Natural killer cell (primary cell): ENCODE measurements at regions of chr11 and their contacts with region 1.

Region 1: GRCh38 chr11:12235947-12236743 is 125.8 kb downstream of the MICAL2 start:
- DNase-seq: peak; percentile 57 to 78
- ATAC-seq: peak; percentile 76 to 85 (median 80)
- H3K4me3 ChIP-seq: no peak overlapping the region
- H3K4me3 Mint-ChIP-seq: peak overlapping the region; percentile 81
- H3K27ac ChIP-seq: peak overlapping the region; percentile 77
- H3K27ac Mint-ChIP-seq: peak overlapping the region; percentile 93 to 94
- H3K4me1 ChIP-seq: peaks cover 24% of the 10 kb centered on the region
- H3K4me1 Mint-ChIP-seq: peaks cover 27 to 28% of the 10 kb centered on the region in 2 donors
- H3K27me3 ChIP-seq: no peaks in the 10 kb centered on the region
- H3K27me3 Mint-ChIP-seq: no peaks in the 10 kb centered on the region
- CTCF ChIP-seq: peak; percentile 86

Region 2: GRCh38 chr11:12043959-12044819 is 192.0 kb before region 1 on chr11:
- intact Hi-C with region 1: loop called (anchors 1 kb)
- DNase-seq: peak; percentile 41 to 85
- ATAC-seq: peak; percentile 66 to 80 (median 70)
- H3K4me3 ChIP-seq: no peak overlapping the region
- H3K4me3 Mint-ChIP-seq: no peak overlapping the region
- H3K27ac ChIP-seq: no peak overlapping the region
- H3K27ac Mint-ChIP-seq: no peak overlapping the region
- H3K4me1 ChIP-seq: peaks cover 9% of the 10 kb centered on the region
- H3K4me1 Mint-ChIP-seq: peaks cover 4 to 7% of the 10 kb centered on the region in 2 donors
- H3K27me3 ChIP-seq: no peaks in the 10 kb centered on the region
- H3K27me3 Mint-ChIP-seq: peaks cover 8 to 17% of the 10 kb centered on the region in 2 donors
- CTCF ChIP-seq: peak; percentile 84

Region 3: DNA sequence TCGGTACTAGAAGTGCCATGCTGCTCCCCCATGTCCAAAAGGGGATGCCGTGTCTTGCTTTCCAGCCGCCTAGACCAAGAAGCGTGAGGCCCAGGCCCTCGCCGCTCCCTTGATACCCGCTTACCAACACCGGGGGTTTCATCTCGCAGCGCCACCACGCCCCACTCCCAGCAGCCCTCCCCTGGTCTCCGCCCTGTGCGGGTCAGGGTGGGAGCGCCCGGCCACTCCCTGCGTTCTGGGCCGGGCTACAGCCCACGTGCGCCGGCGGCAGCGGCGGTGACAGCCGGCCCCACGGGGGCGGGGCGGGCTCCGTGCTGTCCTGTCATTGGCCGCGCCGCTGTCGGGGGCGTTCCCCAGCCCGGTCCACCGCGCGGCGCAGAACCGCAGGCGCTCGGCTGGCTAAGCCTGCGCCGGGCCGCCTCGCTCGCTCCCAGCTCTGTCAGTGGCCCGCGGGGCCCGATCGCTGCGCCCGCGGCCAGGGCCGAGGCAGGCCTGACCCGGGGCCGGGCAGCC is 125.9 kb before region 1 on chr11 and contains the start of gene MICAL2:
- intact Hi-C with region 1: loop called (anchors 1 kb)
- DNase-seq: peak; percentile 86 to 92
- ATAC-seq: peak; percentile 95 to 99 (median 97)
- H3K4me3 ChIP-seq: peak within 1 kb of the TSS; percentile 46
- H3K4me3 Mint-ChIP-seq: peak within 1 kb of the TSS; percentile 83
- H3K27ac ChIP-seq: peak within 1 kb of the TSS; percentile 9
- H3K27ac Mint-ChIP-seq: peak within 1 kb of the TSS in 1 of 2 donors; percentile 80
- H3K4me1 ChIP-seq: peaks cover 44% of the 10 kb centered on the region
- H3K4me1 Mint-ChIP-seq: peaks cover 26 to 32% of the 10 kb centered on the region in 2 donors
- H3K27me3 ChIP-seq: no peaks in the 10 kb centered on the region
- H3K27me3 Mint-ChIP-seq: peaks cover under 1 to 5% of the 10 kb centered on the region in 2 donors
- CTCF ChIP-seq: no peak
- total RNA-seq, gene MICAL2: 54.6 to 68.6 (median 57.4) TPM

Region 4: DNA sequence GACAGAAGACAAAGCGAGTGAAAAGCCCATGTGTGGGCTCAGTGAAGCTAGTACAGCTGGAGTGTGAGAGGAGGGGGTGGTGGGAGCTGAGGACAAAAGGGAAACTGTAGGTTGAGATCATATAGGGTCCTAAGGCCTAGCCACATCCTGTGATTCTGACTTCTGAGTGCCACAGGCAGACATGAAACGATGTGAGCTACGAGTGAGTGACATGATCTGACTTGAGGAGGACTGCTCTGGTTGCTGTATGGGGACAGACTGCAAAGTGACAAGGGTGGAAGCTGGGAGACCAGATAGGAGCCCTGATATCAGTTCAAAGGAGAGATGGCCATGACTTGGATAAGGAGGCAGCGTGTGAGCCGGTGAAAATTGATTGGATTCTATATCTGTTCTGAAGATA is 40.4 kb before region 1 on chr11:
- intact Hi-C with region 1: loop called (anchors 2 kb)
- DNase-seq: peak; percentile 24 to 82
- ATAC-seq: peak; percentile 83 to 92 (median 85)
- H3K4me3 ChIP-seq: peak overlapping the region; percentile 26
- H3K4me3 Mint-ChIP-seq: peak overlapping the region; percentile 89
- H3K27ac ChIP-seq: peak overlapping the region; percentile 81
- H3K27ac Mint-ChIP-seq: peak overlapping the region; percentile 86 to 90
- H3K4me1 ChIP-seq: peaks cover 48% of the 10 kb centered on the region
- H3K4me1 Mint-ChIP-seq: peaks cover 48 to 56% of the 10 kb centered on the region in 2 donors
- H3K27me3 ChIP-seq: no peaks in the 10 kb centered on the region
- H3K27me3 Mint-ChIP-seq: no peaks in the 10 kb centered on the region
- CTCF ChIP-seq: no peak

Region 5: GRCh38 chr11:12224537-12224893 is 11.6 kb before region 1 on chr11:
- intact Hi-C with region 1: loop called (anchors 1 kb)
- DNase-seq: peak; percentile 89 to 95
- ATAC-seq: peak; percentile 89 to 96 (median 94)
- H3K4me3 ChIP-seq: peak overlapping the region; percentile 31
- H3K4me3 Mint-ChIP-seq: peak overlapping the region; percentile 87
- H3K27ac ChIP-seq: peak overlapping the region; percentile 86
- H3K27ac Mint-ChIP-seq: peak overlapping the region; percentile 95
- H3K4me1 ChIP-seq: peaks cover 62% of the 10 kb centered on the region
- H3K4me1 Mint-ChIP-seq: peaks cover 49 to 64% of the 10 kb centered on the region in 2 donors
- H3K27me3 ChIP-seq: no peaks in the 10 kb centered on the region
- H3K27me3 Mint-ChIP-seq: peaks cover 4 to 7% of the 10 kb centered on the region in 2 donors
- CTCF ChIP-seq: no peak

Region 6: DNA sequence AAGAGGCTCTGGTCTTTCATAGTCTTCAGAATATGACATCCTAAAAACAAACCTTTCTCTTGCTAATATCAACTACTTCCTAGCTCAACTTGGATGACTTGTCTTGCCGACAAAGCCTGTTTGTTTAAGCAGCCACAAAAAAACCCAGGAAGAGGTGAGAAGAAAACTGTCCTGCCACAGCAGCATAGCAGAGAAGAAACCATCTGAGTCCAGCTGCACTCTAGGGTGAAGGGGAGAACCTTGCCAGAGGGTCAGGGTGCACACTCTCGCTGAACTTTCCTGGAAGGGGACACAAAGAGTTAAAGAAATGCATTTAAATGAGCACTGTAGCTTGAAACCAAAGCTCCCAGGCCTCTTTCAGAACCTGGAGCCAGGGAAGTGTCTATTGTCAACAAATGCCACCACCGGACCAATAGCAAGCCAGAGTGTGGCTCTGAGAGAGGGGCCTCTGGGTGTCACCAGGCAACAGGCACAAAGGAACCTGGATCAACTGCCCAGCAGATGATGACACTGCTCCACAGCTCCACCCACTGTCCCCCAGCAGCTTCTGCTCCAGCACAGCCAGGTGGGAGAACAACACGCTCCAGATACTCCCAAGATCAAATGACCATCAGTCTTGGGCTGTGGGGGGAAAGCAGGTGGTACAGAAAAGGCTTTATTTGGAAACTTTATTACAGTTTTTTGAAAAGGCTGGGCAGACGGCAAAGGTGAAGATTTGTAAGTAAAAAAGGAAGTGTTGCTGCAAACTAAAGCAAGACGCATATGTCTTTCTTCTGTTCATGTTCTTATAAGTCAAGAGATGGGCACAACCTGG is 878.6 kb after region 1 on chr11:
- intact Hi-C with region 1: no loop called
- DNase-seq: no peak
- ATAC-seq: no peak
- H3K4me3 ChIP-seq: no peak overlapping the region
- H3K4me3 Mint-ChIP-seq: no peak overlapping the region
- H3K27ac ChIP-seq: no peak overlapping the region
- H3K27ac Mint-ChIP-seq: no peak overlapping the region
- H3K4me1 ChIP-seq: no peaks in the 10 kb centered on the region
- H3K4me1 Mint-ChIP-seq: no peaks in the 10 kb centered on the region
- H3K27me3 ChIP-seq: no peaks in the 10 kb centered on the region
- H3K27me3 Mint-ChIP-seq: peaks cover 17 to 41% of the 10 kb centered on the region in 2 donors
- CTCF ChIP-seq: no peak